ENCODE measurements at regions of chr2 and their contacts with region 1.

Region 1: GRCh38 chr2:133434962-133435668 is 133.1 kb downstream of the NCKAP5 start:
- DNase-seq: no peak

Region 2: GRCh38 chr2:132374551-132374950 is 1060.6 kb before region 1 on chr2:
- intact Hi-C with region 1: loop called in 1 of 2 experiments (anchors 5 kb)
- DNase-seq: no peak

Region 3: GRCh38 chr2:132923787-132924186 is 511.3 kb before region 1 on chr2:
- intact Hi-C with region 1: no loop called
- DNase-seq: no peak

Measured in posterior vena cava (tissue), 2 donors.